PC-3 (cell line): ENCODE measurements at regions of chr18 and their contacts with region 1.

Region 1: DNA sequence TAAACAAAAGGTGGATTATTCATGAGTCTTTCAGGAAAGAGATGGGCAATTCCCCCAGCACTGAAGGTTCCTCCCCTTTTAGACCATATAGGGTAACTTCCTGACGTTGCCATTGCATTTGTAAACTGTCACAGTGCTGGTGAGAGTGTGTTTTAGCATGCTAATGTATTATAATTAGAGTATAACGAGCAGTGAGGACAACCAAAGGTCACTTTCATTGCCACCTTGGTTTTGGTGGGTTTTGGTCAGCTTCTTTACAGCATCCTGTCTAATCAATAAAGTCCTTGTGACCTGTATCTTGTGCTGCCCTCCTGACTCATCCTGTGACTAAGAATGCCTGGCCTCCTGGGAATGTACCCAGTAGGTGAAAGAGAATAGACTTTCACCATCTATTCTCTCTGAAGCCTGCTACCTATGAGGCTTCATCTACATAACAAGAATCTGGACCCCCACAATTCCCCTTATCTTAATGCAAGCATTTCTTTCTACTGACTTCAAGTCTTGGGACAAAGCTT is 148.7 kb downstream of the CABLES1 start:
- DNase-seq: peak; percentile 92
- ATAC-seq: peak; percentile 68
- H3K4me3 ChIP-seq: no peak overlapping the region; the same call in 1 of the 2 replicates
- H3K27ac ChIP-seq: peak overlapping the region; percentile 93
- H3K4me1 ChIP-seq: peaks cover 49% of the 10 kb centered on the region
- H3K27me3 ChIP-seq: no peaks in the 10 kb centered on the region
- CTCF ChIP-seq: no peak

Region 2: GRCh38 chr18:23225503-23225902 is 58.5 kb before region 1 on chr18:
- CTCF ChIA-PET with region 1: interaction called, 3 read pairs
- POLR2A ChIA-PET with region 1: no interaction called
- intact Hi-C with region 1: loop called (anchors 2 kb)
- DNase-seq: peak; percentile 82
- ATAC-seq: peak; percentile 78
- H3K4me3 ChIP-seq: no peak overlapping the region
- H3K27ac ChIP-seq: peak overlapping the region; percentile 78
- H3K4me1 ChIP-seq: peaks cover 40% of the 10 kb centered on the region
- H3K27me3 ChIP-seq: no peaks in the 10 kb centered on the region
- CTCF ChIP-seq: no peak

Region 3: GRCh38 chr18:23235860-23236259 is 48.1 kb before region 1 on chr18:
- CTCF ChIA-PET with region 1: no interaction called
- POLR2A ChIA-PET with region 1: no interaction called
- intact Hi-C with region 1: no loop called
- DNase-seq: no peak
- ATAC-seq: no peak
- H3K4me3 ChIP-seq: no peak overlapping the region
- H3K27ac ChIP-seq: no peak overlapping the region
- H3K4me1 ChIP-seq: peaks cover 10% of the 10 kb centered on the region
- H3K27me3 ChIP-seq: no peaks in the 10 kb centered on the region
- CTCF ChIP-seq: no peak

Region 4: DNA sequence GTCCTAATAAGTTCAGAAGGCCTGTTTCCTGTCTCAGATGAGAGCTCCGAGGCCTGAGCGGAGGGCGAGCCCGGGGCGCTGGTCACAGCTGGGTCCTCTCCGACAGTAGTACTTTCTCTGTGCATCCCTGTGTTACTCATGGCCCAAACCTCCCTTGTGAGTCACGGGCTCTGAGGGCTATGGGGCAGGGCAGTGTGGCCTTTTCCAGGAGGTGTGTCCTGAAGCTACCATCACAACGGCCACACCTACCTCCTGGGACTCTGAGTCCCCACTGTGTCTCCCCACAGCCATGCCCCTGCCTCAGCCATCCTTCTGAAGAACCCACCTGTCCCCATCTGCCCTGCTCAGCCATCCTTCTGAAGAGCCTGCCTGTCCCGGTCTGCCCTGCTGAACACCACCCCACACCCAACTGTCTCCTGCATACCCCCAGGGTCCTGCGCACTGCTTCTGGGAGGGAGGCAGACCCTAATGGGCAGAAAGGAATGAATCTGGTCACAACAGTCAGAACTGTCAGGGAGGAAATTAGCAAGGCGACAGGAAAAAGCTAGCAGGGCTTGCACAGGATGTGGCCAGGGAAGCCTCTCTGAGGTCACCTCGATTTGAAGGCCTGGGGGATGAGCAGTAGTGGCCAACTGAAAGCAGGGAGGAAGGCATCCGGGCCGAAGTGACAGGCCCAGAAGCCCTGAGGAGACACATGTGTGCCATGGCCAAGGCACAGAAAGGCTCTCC is 23.8 kb after region 1 on chr18:
- CTCF ChIA-PET with region 1: no interaction called
- POLR2A ChIA-PET with region 1: no interaction called
- intact Hi-C with region 1: loop called (anchors 2 kb)
- DNase-seq: peak; percentile 32
- ATAC-seq: peak; percentile 16; the same call in 1 of the 2 replicates
- H3K4me3 ChIP-seq: no peak overlapping the region
- H3K27ac ChIP-seq: no peak overlapping the region
- H3K4me1 ChIP-seq: peaks cover 28% of the 10 kb centered on the region
- H3K27me3 ChIP-seq: no peaks in the 10 kb centered on the region
- CTCF ChIP-seq: no peak

Region 5: GRCh38 chr18:23377669-23378301 is 93.8 kb after region 1 on chr18:
- CTCF ChIA-PET with region 1: no interaction called
- POLR2A ChIA-PET with region 1: no interaction called
- intact Hi-C with region 1: loop called (anchors 2 kb)
- DNase-seq: peak; percentile 89
- ATAC-seq: peak; percentile 65
- H3K4me3 ChIP-seq: peak overlapping the region; percentile 29; the same call in 1 of the 2 replicates
- H3K27ac ChIP-seq: peak overlapping the region; percentile 86
- H3K4me1 ChIP-seq: peaks cover 38% of the 10 kb centered on the region
- H3K27me3 ChIP-seq: no peaks in the 10 kb centered on the region
- CTCF ChIP-seq: no peak